A549 (cell line): ENCODE measurements at regions of chr9 and their contacts with region 1.

Region 1: DNA sequence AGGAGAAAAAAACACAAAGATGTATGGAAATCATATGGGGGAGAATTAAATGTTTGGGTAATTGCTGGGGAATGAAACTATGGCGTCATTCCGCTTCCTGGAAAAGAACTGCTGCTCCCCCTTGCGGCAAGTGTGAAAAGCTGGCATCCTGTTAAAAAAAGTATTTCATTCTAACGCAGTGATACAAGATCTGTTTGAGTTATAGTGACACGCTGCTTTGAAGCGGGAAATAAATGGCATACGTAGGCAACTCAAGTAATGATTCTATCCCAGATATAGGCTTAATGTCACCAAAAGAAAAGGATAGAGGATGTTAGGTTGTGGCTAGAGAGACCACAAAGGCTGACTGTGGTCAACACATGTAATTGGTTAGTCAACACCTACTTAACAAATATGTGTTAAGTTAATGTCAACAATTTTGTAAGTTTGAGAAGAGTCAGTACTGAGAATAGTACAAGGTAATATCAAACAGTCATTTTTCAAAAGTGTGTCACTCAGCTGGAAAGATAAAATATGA is 70.2 kb upstream of the ALDH1A1 start:
- DNase-seq: peak; percentile 42 to 96
- ATAC-seq: peak; percentile 77 to 89
- H3K4me3 ChIP-seq: no peak overlapping the region; the same call in 2 of the 3 replicates
- H3K27ac ChIP-seq: peak overlapping the region; percentile 87 to 89
- H3K4me1 ChIP-seq: peaks cover 27% of the 10 kb centered on the region
- CTCF ChIP-seq: peak; percentile 92
- EP300 ChIP-seq: peak in 1 of 2 experiments; percentile 41; a peak in 1 of 5 replicates
- POLR2A ChIP-seq: no peak
- RAD21 ChIP-seq: peak; percentile 96 to 97

Region 2: DNA sequence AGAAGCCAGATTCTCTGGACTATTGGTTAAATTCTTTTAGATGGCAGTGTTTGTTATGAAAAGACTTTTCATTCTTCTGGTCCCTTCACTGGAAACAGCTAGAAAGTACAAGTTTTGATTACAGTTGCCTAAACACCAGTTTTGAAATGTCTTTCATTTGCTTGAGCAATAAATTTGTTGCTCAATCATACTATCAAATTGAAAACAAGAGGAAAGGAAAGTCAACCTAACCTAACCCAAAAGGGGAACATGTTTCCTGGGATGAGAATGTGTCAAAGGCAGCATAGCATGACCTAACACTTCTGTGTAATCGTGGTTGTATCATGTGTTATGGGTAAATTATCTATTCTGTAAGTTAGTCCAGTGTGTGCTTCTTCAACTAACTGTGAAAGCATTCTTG is 288.5 kb before region 1 on chr9:
- CTCF ChIA-PET with region 1: no interaction called
- POLR2A ChIA-PET with region 1: no interaction called
- DNase-seq: no peak
- ATAC-seq: no peak
- H3K4me3 ChIP-seq: no peak overlapping the region
- H3K27ac ChIP-seq: no peak overlapping the region
- H3K4me1 ChIP-seq: no peaks in the 10 kb centered on the region
- CTCF ChIP-seq: no peak
- EP300 ChIP-seq: no peak
- POLR2A ChIP-seq: no peak
- RAD21 ChIP-seq: no peak

Region 3: GRCh38 chr9:72856972-72857623 is 166.0 kb before region 1 on chr9:
- CTCF ChIA-PET with region 1: interaction called, 17 read pairs
- POLR2A ChIA-PET with region 1: no interaction called
- DNase-seq: peak; percentile 66 to 92
- ATAC-seq: peak; percentile 75
- H3K4me3 ChIP-seq: no peak overlapping the region
- H3K27ac ChIP-seq: peak overlapping the region; percentile 92 to 93
- H3K4me1 ChIP-seq: peaks cover 43% of the 10 kb centered on the region
- CTCF ChIP-seq: peak; percentile 82
- EP300 ChIP-seq: no peak
- POLR2A ChIP-seq: no peak
- RAD21 ChIP-seq: peak; percentile 80 to 82

Region 4: GRCh38 chr9:72931437-72931836 is 91.6 kb before region 1 on chr9:
- CTCF ChIA-PET with region 1: interaction called, 17 read pairs
- POLR2A ChIA-PET with region 1: no interaction called
- DNase-seq: no peak
- ATAC-seq: peak; percentile 23 to 24; a peak in 3 of 6 replicates
- H3K4me3 ChIP-seq: peak overlapping the region; percentile 67
- H3K27ac ChIP-seq: peak overlapping the region; percentile 83 to 90
- H3K4me1 ChIP-seq: peaks cover 100% of the 10 kb centered on the region
- CTCF ChIP-seq: no peak
- EP300 ChIP-seq: no peak
- POLR2A ChIP-seq: no peak
- RAD21 ChIP-seq: no peak

Region 5: DNA sequence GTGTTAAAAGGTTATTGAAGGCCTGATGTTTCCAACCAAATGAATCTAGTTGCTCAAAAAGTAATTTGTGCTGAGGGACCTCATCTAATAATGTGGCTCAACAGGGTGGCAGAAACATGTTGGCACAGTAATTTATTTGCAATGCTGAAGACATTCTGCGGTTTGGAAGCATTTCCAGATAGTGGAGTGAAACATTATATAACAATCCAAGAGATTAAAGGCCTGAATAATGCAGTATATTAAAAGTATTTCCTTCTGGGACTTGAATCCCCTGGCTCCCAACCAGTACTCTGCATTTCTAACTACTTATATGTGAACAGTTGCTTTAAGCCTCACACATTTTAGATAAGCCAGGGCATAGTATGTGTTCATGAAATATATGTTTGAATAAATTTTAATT is 44.3 kb before region 1 on chr9:
- CTCF ChIA-PET with region 1: interaction called, 15 read pairs
- POLR2A ChIA-PET with region 1: no interaction called
- DNase-seq: peak in 1 of 2 experiments; percentile 68
- ATAC-seq: peak in 1 of 2 experiments; percentile 22; a peak in 3 of 6 replicates
- H3K4me3 ChIP-seq: no peak overlapping the region
- H3K27ac ChIP-seq: peak overlapping the region; percentile 96 to 98
- H3K4me1 ChIP-seq: peaks cover 68% of the 10 kb centered on the region
- CTCF ChIP-seq: no peak
- EP300 ChIP-seq: peak; percentile 75 to 89; a peak in 3 of 5 replicates
- POLR2A ChIP-seq: no peak
- RAD21 ChIP-seq: 0 out of 5 replicates have a peak, but pooled peaks of 1 of the 2 experiments have one; percentile 22

Region 6: GRCh38 chr9:73009649-73010288 is 13.3 kb before region 1 on chr9:
- CTCF ChIA-PET with region 1: interaction called, 21 read pairs
- POLR2A ChIA-PET with region 1: no interaction called
- DNase-seq: peak in 1 of 2 experiments; percentile 35
- ATAC-seq: peak; percentile 70 to 82; a peak in 4 of 6 replicates
- H3K4me3 ChIP-seq: no peak overlapping the region
- H3K27ac ChIP-seq: peak overlapping the region; percentile 14 to 59; a peak in 4 of 6 replicates
- H3K4me1 ChIP-seq: peaks cover 52% of the 10 kb centered on the region
- CTCF ChIP-seq: no peak
- EP300 ChIP-seq: no peak
- POLR2A ChIP-seq: no peak
- RAD21 ChIP-seq: no peak

Region 7: GRCh38 chr9:73073337-73074175 is 50.5 kb after region 1 on chr9:
- CTCF ChIA-PET with region 1: interaction called, 14 read pairs
- POLR2A ChIA-PET with region 1: no interaction called
- DNase-seq: peak in 1 of 2 experiments; percentile 91
- ATAC-seq: peak; percentile 59 to 64; a peak in 5 of 6 replicates
- H3K4me3 ChIP-seq: no peak overlapping the region
- H3K27ac ChIP-seq: peak overlapping the region; percentile 82 to 89
- H3K4me1 ChIP-seq: peaks cover 61% of the 10 kb centered on the region
- CTCF ChIP-seq: no peak
- EP300 ChIP-seq: no peak
- POLR2A ChIP-seq: no peak
- RAD21 ChIP-seq: 0 out of 5 replicates have a peak, but pooled peaks of 1 of the 2 experiments have one; percentile 8

Region 8: GRCh38 chr9:73541923-73542322 is 518.8 kb after region 1 on chr9:
- CTCF ChIA-PET with region 1: no interaction called
- POLR2A ChIA-PET with region 1: no interaction called
- DNase-seq: no peak
- ATAC-seq: peak; percentile 59; a peak in 3 of 6 replicates
- H3K4me3 ChIP-seq: no peak overlapping the region
- H3K27ac ChIP-seq: no peak overlapping the region
- H3K4me1 ChIP-seq: no peaks in the 10 kb centered on the region
- CTCF ChIP-seq: no peak
- EP300 ChIP-seq: no peak
- POLR2A ChIP-seq: no peak
- RAD21 ChIP-seq: no peak